ENCODE measurements at regions of chr16 and their contacts with region 1.

Region 1: DNA sequence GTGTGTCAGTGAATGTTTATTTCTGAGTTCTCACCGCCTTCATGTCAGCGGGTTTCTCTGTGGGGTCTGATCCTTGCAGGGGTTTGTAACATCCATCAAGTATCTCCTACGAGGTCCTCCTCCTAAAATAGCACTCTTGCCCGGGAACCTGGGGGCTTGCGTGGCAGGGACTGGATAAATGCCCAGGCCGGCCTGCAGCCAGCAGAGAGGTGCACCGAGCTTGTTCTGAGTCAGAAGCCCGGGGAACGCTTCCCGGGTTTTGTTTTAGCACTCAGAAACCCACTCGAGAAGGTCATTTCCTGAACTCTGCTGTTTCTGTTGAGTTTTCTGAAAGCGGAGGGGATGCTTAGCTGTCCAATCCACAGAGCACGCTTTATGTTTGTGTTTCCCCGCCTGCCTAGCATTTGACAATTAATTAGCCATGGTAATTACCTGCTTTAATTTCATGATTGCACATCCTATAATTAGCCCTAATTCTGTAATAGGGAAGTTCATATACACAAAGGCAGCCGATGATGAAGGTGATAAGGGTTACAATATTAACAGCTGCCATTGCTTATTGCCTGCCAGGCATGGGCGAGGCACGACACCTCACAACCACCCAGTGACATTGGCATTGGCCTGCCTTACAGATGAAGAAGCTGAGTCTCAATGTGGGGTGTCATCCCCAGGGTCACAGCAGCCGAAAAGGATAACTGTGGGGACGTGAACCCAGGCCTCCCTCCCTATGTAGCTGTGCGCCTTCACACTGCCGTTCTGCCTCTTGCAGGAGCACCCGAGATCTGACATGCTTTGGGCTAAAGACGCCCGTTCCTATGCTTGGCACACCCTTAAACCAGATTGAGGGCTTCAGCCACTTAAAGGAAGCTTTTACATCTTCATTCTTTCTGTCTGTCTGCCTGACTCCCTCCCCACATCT is 333.1 kb downstream of the CPPED1 start:
- DNase-seq: peak; percentile 65 to 87 (median 71)
- ATAC-seq: peak; percentile 74 to 96 (median 94)
- H3K4me3 ChIP-seq: no peak overlapping the region
- H3K27ac ChIP-seq: peak overlapping the region in 5 of 12 donors; percentile 30 to 71 (median 56)
- H3K4me1 ChIP-seq: peaks cover 0 to 18% (median 0%) of the 10 kb centered on the region in 12 donors
- H3K27me3 ChIP-seq: no peaks in the 10 kb centered on the region
- CTCF ChIP-seq: no peak
- POLR2A ChIP-seq: no peak

Region 2: GRCh38 chr16:10641953-10642949 is 1828.3 kb before region 1 on chr16:
- intact Hi-C with region 1: no loop called
- DNase-seq: no peak
- ATAC-seq: no peak
- H3K4me3 ChIP-seq: no peak overlapping the region
- H3K27ac ChIP-seq: no peak overlapping the region
- H3K4me1 ChIP-seq: no peaks in the 10 kb centered on the region
- H3K27me3 ChIP-seq: no peaks in the 10 kb centered on the region
- CTCF ChIP-seq: no peak
- POLR2A ChIP-seq: no peak

Region 3: DNA sequence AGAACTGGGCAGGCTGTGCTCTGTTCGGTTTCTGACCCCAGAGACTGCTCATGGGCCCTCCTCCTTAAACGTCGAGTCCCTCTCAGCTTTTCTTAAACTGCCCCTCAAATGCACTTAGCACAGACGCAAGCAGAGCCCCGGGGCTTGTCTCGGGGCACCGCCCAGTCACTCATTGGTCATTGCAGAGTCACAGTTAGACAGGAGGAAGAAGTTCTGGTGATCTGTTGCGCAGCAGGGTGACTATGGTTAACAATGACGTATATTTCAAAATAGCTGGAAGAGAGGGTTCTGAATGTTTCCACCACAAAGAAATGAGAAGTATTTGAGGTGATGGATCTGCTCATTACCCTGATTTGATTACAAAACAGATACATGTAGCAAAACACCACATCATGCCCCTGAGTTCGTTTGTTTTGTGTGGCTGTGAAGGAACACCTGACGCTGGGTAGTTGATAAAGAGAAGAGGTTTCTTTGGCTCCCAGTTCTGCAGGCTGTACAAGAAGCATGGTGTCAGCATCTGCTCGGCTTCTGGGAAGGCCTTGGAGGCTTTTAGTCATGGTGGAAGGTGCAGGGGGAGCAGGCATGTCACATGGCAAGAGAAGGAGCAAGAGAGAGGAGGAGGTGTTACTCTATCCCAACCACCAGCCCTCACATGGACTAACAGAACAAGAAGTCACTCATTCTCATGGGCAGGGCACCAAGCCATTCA is 54.3 kb before region 1 on chr16:
- intact Hi-C with region 1: loop called in 1 of 10 experiments (anchors 10 kb)
- DNase-seq: no peak
- ATAC-seq: no peak
- H3K4me3 ChIP-seq: no peak overlapping the region
- H3K27ac ChIP-seq: no peak overlapping the region
- H3K4me1 ChIP-seq: no peaks in the 10 kb centered on the region
- H3K27me3 ChIP-seq: no peaks in the 10 kb centered on the region
- CTCF ChIP-seq: no peak
- POLR2A ChIP-seq: no peak

Region 4: GRCh38 chr16:12729448-12729847 is 258.9 kb after region 1 on chr16:
- intact Hi-C with region 1: no loop called
- DNase-seq: no peak
- ATAC-seq: peak in 3 of 4 donors; percentile 34 to 80 (median 42)
- H3K4me3 ChIP-seq: no peak overlapping the region
- H3K27ac ChIP-seq: peak overlapping the region in 4 of 12 donors; percentile 6 to 55 (median 45)
- H3K4me1 ChIP-seq: peaks cover 0 to 11% (median 0%) of the 10 kb centered on the region in 12 donors
- H3K27me3 ChIP-seq: no peaks in the 10 kb centered on the region
- CTCF ChIP-seq: no peak
- POLR2A ChIP-seq: no peak